B cell (primary cell): ENCODE measurements at regions of chr1 and their contacts with region 1.

Region 1: DNA sequence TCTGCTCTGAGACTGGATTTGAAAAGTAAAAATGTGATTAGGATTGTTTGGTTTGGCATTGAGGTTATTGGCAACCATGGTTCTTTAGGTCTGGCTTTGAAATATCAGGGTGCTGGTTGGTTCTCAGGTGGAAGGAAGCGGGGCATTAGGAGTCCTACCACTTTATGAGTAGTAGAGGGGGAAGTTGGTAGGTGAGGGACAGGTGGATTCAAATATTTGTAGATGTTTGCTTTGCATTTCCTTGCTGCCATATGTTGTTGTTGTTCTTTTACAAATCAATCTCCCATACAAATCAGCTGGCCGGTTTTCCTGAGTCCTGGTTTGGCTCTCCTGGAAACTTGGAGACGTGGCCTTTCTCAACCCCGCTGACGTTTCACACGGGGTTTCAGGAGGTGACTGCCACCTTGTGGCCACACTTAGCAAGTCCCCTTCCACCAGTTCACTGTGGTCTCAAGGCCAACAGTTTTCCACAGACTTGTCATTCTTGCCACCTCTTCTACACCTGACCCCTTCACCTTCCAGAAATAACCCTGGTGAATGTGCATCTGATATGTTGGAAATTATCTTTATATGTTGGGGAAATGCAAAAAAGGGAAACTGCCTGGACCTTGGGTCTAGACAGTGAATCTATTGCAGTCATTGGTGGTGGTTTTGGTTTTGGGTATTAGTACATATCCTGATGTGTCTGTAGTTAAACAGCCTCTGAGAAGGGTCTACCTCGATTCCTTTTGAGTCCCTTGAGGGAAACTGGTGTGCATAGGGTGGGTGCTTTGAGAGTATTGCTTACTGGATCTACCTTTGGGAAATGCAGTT is 127.0 kb upstream of the KIAA0040 start:
- DNase-seq: peak; percentile 83
- ATAC-seq: peak; percentile 88
- H3K4me3 ChIP-seq: peak overlapping the region in 3 of 5 experiments; percentile 15 to 49 (median 27)
- H3K4me3 Mint-ChIP-seq: peak overlapping the region; percentile 80
- H3K27ac ChIP-seq: peak overlapping the region in 1 of 2 donors; percentile 20
- H3K27ac Mint-ChIP-seq: peak overlapping the region; percentile 75
- H3K4me1 ChIP-seq: peaks cover 6 to 14% of the 10 kb centered on the region in 2 donors
- H3K4me1 Mint-ChIP-seq: peaks cover 26% of the 10 kb centered on the region
- H3K27me3 ChIP-seq: peaks cover 0 to 3% (median 0%) of the 10 kb centered on the region in 4 experiments
- H3K27me3 Mint-ChIP-seq: no peaks in the 10 kb centered on the region
- CTCF ChIP-seq: peak; percentile 91

Region 2: DNA sequence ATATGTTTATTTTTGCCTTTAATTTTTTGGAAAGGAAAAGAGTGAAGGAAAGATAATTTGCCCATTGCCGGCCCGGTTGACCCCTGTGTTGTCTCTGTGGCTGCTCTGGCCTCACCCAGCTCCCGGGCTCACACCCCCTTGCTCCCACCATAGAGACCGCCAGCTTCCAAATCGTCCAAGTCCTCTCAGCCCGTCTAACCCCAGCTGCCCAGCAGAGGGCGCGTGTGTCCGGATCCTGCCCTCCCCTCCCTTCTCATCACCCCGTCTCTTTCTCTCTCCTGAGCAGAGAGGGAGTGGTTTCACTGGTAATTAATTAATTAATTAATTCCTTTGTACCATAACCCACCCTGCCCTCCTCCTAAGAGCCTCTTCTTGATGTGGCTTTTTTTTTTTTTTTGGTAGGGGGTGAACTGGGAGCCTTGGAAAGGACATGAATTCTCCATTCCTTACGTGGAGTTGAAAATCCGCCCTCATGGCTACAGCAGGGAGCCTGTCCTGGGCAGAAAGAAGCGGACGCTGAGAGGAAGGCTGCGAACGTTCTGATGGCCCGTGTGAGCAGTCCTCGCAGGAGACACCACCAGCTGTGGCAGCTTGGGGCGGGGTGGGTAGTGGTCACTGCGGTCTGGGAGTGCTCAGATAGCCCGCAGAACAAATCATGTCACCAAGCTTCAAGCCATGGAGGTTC is 173.0 kb before region 1 on chr1:
- CTCF ChIA-PET with region 1: interaction called, 468 read pairs
- POLR2A ChIA-PET with region 1: interaction called, 4 read pairs
- intact Hi-C with region 1: no loop called
- DNase-seq: peak; percentile 73
- ATAC-seq: peak; percentile 82
- H3K4me3 ChIP-seq: no peak overlapping the region
- H3K4me3 Mint-ChIP-seq: no peak overlapping the region
- H3K27ac ChIP-seq: no peak overlapping the region
- H3K27ac Mint-ChIP-seq: peak overlapping the region; percentile 28
- H3K4me1 ChIP-seq: peaks cover 0 to 12% of the 10 kb centered on the region in 2 donors
- H3K4me1 Mint-ChIP-seq: peaks cover 16% of the 10 kb centered on the region
- H3K27me3 ChIP-seq: peaks cover 0 to 15% (median 7%) of the 10 kb centered on the region in 4 experiments
- H3K27me3 Mint-ChIP-seq: peaks cover 27% of the 10 kb centered on the region
- CTCF ChIP-seq: peak; percentile 91

Region 3: GRCh38 chr1:175192630-175193526 is 126.7 kb before region 1 on chr1 and contains the start of gene KIAA0040:
- CTCF ChIA-PET with region 1: interaction called, 90 read pairs
- POLR2A ChIA-PET with region 1: interaction called, 3 read pairs
- intact Hi-C with region 1: no loop called
- DNase-seq: peak; percentile 84
- ATAC-seq: peak; percentile 61
- H3K4me3 ChIP-seq: peak within 1 kb of the TSS; percentile 71 to 99 (median 97)
- H3K4me3 Mint-ChIP-seq: peak within 1 kb of the TSS; percentile 99
- H3K27ac ChIP-seq: peak within 1 kb of the TSS; percentile 69 to 81
- H3K27ac Mint-ChIP-seq: peak within 1 kb of the TSS; percentile 96
- H3K4me1 ChIP-seq: peaks cover 81 to 87% of the 10 kb centered on the region in 2 donors
- H3K4me1 Mint-ChIP-seq: peaks cover 88% of the 10 kb centered on the region
- H3K27me3 ChIP-seq: no peaks in the 10 kb centered on the region
- H3K27me3 Mint-ChIP-seq: no peaks in the 10 kb centered on the region
- CTCF ChIP-seq: no peak
- total RNA-seq, gene KIAA0040: 84.2 and 93.6 TPM in 2 replicates

Region 4: DNA sequence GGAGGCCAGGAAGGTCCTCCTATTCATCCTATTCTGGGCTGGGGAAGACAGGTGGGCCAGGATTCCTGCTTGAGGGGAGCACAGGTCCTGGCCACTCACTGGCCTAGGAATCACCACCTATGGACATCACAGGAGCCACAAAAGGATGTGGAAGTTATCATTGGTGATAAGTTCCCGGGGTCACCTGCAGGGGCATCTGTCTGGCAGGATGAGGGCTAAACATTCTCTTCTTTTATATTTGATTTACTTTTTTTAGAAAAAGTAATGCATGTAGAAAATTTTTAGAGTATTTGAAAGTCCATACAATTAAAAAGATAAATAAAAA is 93.9 kb before region 1 on chr1:
- CTCF ChIA-PET with region 1: interaction called, 8 read pairs
- POLR2A ChIA-PET with region 1: no interaction called
- intact Hi-C with region 1: loop called (anchors 5 kb)
- DNase-seq: no peak
- ATAC-seq: peak; percentile 22
- H3K4me3 ChIP-seq: no peak overlapping the region
- H3K4me3 Mint-ChIP-seq: peak overlapping the region; percentile 74
- H3K27ac ChIP-seq: peak overlapping the region; percentile 82 to 86
- H3K27ac Mint-ChIP-seq: peak overlapping the region; percentile 95
- H3K4me1 ChIP-seq: peaks cover 62 to 65% of the 10 kb centered on the region in 2 donors
- H3K4me1 Mint-ChIP-seq: peaks cover 81% of the 10 kb centered on the region
- H3K27me3 ChIP-seq: no peaks in the 10 kb centered on the region
- H3K27me3 Mint-ChIP-seq: no peaks in the 10 kb centered on the region
- CTCF ChIP-seq: peak; percentile 57

Region 5: GRCh38 chr1:175307160-175307559 is 12.5 kb before region 1 on chr1:
- CTCF ChIA-PET with region 1: interaction called, 39 read pairs
- POLR2A ChIA-PET with region 1: no interaction called
- intact Hi-C with region 1: no loop called
- DNase-seq: peak; percentile 40
- ATAC-seq: peak; percentile 66
- H3K4me3 ChIP-seq: no peak overlapping the region
- H3K4me3 Mint-ChIP-seq: peak overlapping the region; percentile 29
- H3K27ac ChIP-seq: no peak overlapping the region
- H3K27ac Mint-ChIP-seq: peak overlapping the region; percentile 51
- H3K4me1 ChIP-seq: peaks cover 24 to 26% of the 10 kb centered on the region in 2 donors
- H3K4me1 Mint-ChIP-seq: peaks cover 35% of the 10 kb centered on the region
- H3K27me3 ChIP-seq: no peaks in the 10 kb centered on the region
- H3K27me3 Mint-ChIP-seq: no peaks in the 10 kb centered on the region
- CTCF ChIP-seq: no peak